Activated CD4-positive, alpha-beta T cell treated with anti-CD3 and anti-CD28 coated beads for 36 hours (primary cell): ENCODE measurements at regions of chr16 and their contacts with region 1.

Region 1: GRCh38 chr16:29805378-29806098 is 791 bp upstream of the MAZ start:
- DNase-seq: peak; percentile 99
- ATAC-seq: peak; percentile 64
- H3K4me3 Mint-ChIP-seq: peak overlapping the region; percentile 99
- H3K27ac Mint-ChIP-seq: peak overlapping the region; percentile 100
- H3K4me1 Mint-ChIP-seq: peaks cover 37% of the 10 kb centered on the region
- H3K27me3 Mint-ChIP-seq: no peaks in the 10 kb centered on the region

Region 2: GRCh38 chr16:28211712-28212534 is 1593.6 kb before region 1 on chr16 and contains the start of gene XPO6:
- CTCF ChIA-PET with region 1: no interaction called
- POLR2A ChIA-PET with region 1: no interaction called
- intact Hi-C with region 1: loop called in 1 of 2 experiments (anchors 5 kb)
- DNase-seq: peak; percentile 100
- ATAC-seq: peak; percentile 82
- H3K4me3 Mint-ChIP-seq: peak within 1 kb of the TSS; percentile 96
- H3K27ac Mint-ChIP-seq: peak within 1 kb of the TSS; percentile 99
- H3K4me1 Mint-ChIP-seq: peaks cover 32% of the 10 kb centered on the region
- H3K27me3 Mint-ChIP-seq: no peaks in the 10 kb centered on the region
- total RNA-seq, gene XPO6: 241 to 368 TPM

Region 3: DNA sequence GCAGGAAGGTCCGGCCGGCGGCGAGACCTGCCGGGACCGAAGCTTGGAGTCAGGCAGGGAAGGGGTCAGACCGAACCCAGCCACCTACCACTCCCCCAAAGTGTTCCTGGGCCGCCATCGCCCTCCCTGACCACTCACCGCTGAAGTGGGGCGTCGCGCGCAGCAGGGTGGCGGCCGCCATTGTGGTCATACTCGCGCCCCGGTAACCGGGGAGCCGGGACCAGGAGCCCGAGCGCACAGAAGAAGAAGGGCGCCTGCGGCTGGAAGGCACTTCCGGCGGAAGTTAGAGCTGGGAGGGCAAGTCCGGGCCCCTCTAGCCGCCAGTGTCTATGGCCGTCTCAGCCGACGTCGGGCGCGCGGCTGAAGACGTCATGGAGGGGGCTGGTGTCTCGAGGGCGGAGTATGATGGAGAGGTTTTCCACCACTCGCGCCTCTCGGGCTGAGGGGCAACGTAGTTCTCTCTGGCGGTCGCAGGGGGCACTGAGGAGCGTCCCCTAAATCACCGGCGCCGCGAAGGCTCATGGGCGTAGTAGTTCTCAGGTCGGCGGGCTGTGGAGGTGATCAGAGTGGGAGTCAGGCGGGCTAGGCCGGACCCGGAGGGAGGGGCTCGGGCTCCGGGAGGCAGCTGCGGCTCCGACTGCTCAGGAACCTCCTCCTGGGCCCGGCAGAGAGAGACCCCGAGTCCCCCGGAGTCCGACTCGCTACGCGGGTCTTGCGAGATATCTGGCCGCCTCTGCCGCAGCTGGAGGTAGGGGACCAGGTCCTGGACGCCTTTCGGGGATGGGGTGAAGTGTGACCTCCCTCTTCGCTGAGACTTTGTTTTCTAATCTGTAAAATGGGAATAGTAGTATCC is 959.2 kb before region 1 on chr16 and contains the start of gene TUFM:
- CTCF ChIA-PET with region 1: no interaction called
- POLR2A ChIA-PET with region 1: no interaction called
- intact Hi-C with region 1: loop called in 1 of 2 experiments (anchors 5 kb)
- DNase-seq: peak; percentile 99
- ATAC-seq: peak; percentile 94
- H3K4me3 Mint-ChIP-seq: peak within 1 kb of the TSS; percentile 97
- H3K27ac Mint-ChIP-seq: peak within 1 kb of the TSS; percentile 97
- H3K4me1 Mint-ChIP-seq: peaks cover 23% of the 10 kb centered on the region
- H3K27me3 Mint-ChIP-seq: no peaks in the 10 kb centered on the region
- total RNA-seq, gene TUFM: 224 to 241 TPM

Region 4: GRCh38 chr16:29790183-29790952 is 15.2 kb before region 1 on chr16 and contains the start of gene KIF22:
- CTCF ChIA-PET with region 1: interaction called, 23 read pairs
- POLR2A ChIA-PET with region 1: interaction called, 21 read pairs
- intact Hi-C with region 1: loop called (anchors 1 kb)
- DNase-seq: peak; percentile 100
- ATAC-seq: peak; percentile 95
- H3K4me3 Mint-ChIP-seq: peak within 1 kb of the TSS; percentile 91
- H3K27ac Mint-ChIP-seq: peak within 1 kb of the TSS; percentile 97
- H3K4me1 Mint-ChIP-seq: peaks cover 30% of the 10 kb centered on the region
- H3K27me3 Mint-ChIP-seq: no peaks in the 10 kb centered on the region
- total RNA-seq, gene KIF22: 153 to 168 TPM

Region 5: GRCh38 chr16:29825145-29826044 is 19.9 kb after region 1 on chr16:
- CTCF ChIA-PET with region 1: interaction called, 10 read pairs
- POLR2A ChIA-PET with region 1: interaction called, 7 read pairs
- intact Hi-C with region 1: loop called in 1 of 2 experiments (anchors 1 kb)
- DNase-seq: peak; percentile 72
- ATAC-seq: peak; percentile 57
- H3K4me3 Mint-ChIP-seq: peak overlapping the region; percentile 53
- H3K27ac Mint-ChIP-seq: peak overlapping the region; percentile 91
- H3K4me1 Mint-ChIP-seq: peaks cover 78% of the 10 kb centered on the region
- H3K27me3 Mint-ChIP-seq: no peaks in the 10 kb centered on the region

Region 6: GRCh38 chr16:29961479-29962343 is 156.2 kb after region 1 on chr16 and contains the start of gene TMEM219:
- CTCF ChIA-PET with region 1: interaction called, 3 read pairs
- POLR2A ChIA-PET with region 1: no interaction called
- intact Hi-C with region 1: loop called in 1 of 2 experiments (anchors 1 kb)
- DNase-seq: peak; percentile 94
- ATAC-seq: peak; percentile 95
- H3K4me3 Mint-ChIP-seq: peak within 1 kb of the TSS; percentile 88
- H3K27ac Mint-ChIP-seq: peak within 1 kb of the TSS; percentile 87
- H3K4me1 Mint-ChIP-seq: peaks cover 17% of the 10 kb centered on the region
- H3K27me3 Mint-ChIP-seq: no peaks in the 10 kb centered on the region
- total RNA-seq, gene TMEM219: 34.6 to 42.5 TPM

Region 7: DNA sequence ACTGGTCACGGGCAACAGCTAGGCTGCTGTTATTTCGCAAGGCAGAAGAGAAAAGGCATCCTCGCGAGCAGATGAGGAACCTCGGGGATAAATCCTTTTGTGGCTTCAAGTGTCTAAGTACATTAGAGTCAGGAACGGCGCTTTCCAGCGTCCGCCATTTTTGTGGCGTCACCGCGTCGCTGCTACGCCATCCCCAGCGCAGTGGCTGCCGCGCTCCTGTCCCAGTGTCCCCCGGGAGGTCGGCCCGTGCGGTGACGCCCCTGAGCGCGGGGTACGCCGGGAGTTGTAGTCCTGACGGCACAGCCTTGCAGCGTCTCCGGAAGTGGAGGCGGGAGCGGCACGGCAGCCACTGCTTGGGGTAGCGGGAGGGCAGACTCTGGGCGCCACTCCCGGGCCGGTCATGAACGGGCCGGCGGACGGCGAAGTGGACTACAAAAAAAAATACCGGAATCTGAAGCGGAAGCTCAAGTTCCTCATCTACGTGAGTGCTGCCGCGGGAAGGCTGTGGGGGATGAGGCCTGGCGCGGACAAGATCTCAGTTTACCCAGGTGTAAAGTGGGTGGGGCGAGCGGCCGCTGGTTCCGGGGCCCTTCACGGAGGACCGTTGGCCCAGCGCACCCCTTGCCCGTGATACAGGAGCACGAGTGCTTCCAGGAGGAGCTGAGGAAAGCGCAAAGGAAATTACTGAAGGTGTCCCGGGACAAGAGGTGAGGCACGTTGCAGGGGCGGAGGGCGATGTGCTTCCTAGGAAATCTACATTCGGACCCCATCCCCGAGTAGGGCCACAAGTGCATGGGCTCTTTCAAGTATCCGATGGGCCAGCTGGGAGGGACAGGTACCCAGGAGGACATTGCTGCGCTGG is 190.6 kb after region 1 on chr16 and contains the start of gene INO80E:
- CTCF ChIA-PET with region 1: no interaction called
- POLR2A ChIA-PET with region 1: no interaction called
- intact Hi-C with region 1: loop called (anchors 1 to 10 kb)
- DNase-seq: peak; percentile 100
- ATAC-seq: peak; percentile 98
- H3K4me3 Mint-ChIP-seq: peak within 1 kb of the TSS; percentile 96
- H3K27ac Mint-ChIP-seq: peak within 1 kb of the TSS; percentile 98
- H3K4me1 Mint-ChIP-seq: peaks cover 25% of the 10 kb centered on the region
- H3K27me3 Mint-ChIP-seq: no peaks in the 10 kb centered on the region
- total RNA-seq, gene INO80E: 80.1 to 106 TPM